ENCODE measurements at regions of chr6 and their contacts with region 1.

Region 1: DNA sequence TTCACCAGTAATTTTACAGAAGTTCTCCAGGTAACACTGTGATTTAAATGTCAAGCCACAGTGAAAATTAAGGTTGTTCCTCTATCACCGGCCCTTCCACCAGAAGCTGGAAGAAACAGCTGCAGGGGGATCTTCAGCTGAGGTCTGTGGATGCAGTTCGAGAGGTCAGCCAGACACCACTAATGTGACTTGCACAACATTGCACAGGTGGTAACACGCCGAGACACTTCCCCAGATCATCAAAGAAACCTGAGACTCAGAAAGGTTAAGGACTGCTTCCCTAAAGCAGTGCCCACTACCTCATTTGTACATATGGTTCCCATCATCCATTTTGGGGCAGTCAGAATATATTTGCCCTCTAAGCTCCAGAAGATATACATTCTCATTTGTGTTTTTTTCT is 8.1 kb upstream of the SERPINB9 start:
- DNase-seq: no peak
- H3K4me3 Mint-ChIP-seq: no peak overlapping the region
- H3K27ac Mint-ChIP-seq: no peak overlapping the region
- H3K4me1 Mint-ChIP-seq: peaks cover 43% of the 10 kb centered on the region
- H3K27me3 Mint-ChIP-seq: no peaks in the 10 kb centered on the region

Region 2: GRCh38 chr6:2791124-2791974 is 119.8 kb before region 1 on chr6:
- CTCF ChIA-PET with region 1: interaction called, 17 read pairs
- intact Hi-C with region 1: loop called (anchors 1 kb)
- DNase-seq: peak; percentile 87
- H3K4me3 Mint-ChIP-seq: no peak overlapping the region
- H3K27ac Mint-ChIP-seq: no peak overlapping the region
- H3K4me1 Mint-ChIP-seq: peaks cover 39% of the 10 kb centered on the region
- H3K27me3 Mint-ChIP-seq: no peaks in the 10 kb centered on the region

Region 3: DNA sequence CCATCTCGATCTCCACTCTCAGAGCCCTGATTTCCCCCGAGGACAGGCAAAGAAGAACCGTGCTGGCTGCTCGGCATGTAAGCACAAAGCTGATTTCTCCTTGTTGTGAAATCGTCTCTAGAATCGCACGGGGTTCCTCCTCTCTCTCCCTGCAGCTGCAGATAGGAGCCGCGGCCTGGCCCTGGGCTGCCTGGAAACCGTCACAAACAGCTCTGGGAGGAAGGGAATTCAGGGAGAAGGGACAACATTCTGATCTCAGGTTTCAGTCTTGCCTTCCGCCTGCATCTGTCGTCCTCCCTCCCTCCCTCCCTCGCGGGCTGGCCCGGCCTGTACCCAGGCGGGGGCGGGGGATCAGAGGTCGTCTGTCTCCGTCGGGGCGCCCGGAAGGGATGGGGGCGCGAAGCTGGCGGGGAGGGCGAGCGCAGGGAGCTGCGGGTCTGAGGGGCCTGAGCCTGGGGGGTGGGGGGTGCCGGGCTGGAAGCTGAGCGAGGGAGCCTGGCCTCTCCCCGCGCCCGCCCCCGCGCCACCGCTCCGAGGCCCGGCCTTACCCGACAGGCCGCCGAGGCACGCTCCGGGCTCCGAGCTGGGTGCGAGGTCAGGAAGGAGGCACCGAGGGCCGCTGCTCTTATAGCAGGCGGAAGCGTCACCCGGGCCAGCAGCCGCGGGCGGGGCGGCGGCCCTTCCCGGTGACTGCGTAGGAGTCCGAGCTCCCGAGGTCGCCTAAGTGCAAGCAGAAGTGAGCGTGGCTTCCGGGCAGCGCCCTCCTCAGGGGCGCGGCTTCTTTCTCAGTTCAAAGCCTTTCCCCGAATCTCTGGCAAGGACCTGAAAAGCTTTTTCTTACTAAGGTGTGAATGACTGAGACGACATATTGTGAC is 69.7 kb before region 1 on chr6 and contains the start of gene SERPINB1:
- CTCF ChIA-PET with region 1: interaction called, 63 read pairs
- intact Hi-C with region 1: loop called (anchors 1 kb)
- DNase-seq: peak; percentile 94
- H3K4me3 Mint-ChIP-seq: peak within 1 kb of the TSS; percentile 81
- H3K27ac Mint-ChIP-seq: peak within 1 kb of the TSS; percentile 87
- H3K4me1 Mint-ChIP-seq: peaks cover 61% of the 10 kb centered on the region
- H3K27me3 Mint-ChIP-seq: no peaks in the 10 kb centered on the region
- total RNA-seq, gene SERPINB1: 200 to 208 TPM

Region 4: DNA sequence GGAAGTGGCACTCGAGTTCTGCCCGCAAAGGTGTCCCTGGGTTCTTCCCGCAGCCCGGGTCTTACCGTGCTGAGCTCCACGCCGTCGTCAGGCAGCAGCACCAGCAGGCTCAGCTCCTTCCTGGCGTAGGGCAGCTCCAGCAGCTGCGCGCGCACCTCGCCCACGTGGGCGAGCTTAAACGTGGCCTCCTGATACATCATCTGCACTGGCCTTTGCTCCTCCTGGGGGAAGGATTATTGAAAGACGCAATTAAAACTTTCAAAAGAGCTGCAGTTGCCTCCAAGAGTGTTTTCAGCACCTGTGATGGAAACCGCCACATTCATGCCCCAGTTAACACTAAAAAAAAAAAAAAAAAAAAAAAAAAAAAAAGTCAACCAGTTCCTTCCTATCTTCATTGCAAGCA is 19.4 kb before region 1 on chr6:
- CTCF ChIA-PET with region 1: interaction called, 6 read pairs
- intact Hi-C with region 1: loop called (anchors 2 kb)
- DNase-seq: peak; percentile 85
- H3K4me3 Mint-ChIP-seq: peak overlapping the region; percentile 75
- H3K27ac Mint-ChIP-seq: peak overlapping the region; percentile 88
- H3K4me1 Mint-ChIP-seq: peaks cover 71% of the 10 kb centered on the region
- H3K27me3 Mint-ChIP-seq: no peaks in the 10 kb centered on the region

Region 5: GRCh38 chr6:2900821-2901644 is 10.1 kb before region 1 on chr6:
- CTCF ChIA-PET with region 1: interaction called, 14 read pairs
- intact Hi-C with region 1: loop called (anchors 1 kb)
- DNase-seq: no peak
- H3K4me3 Mint-ChIP-seq: peak overlapping the region; percentile 99
- H3K27ac Mint-ChIP-seq: peak overlapping the region; percentile 96
- H3K4me1 Mint-ChIP-seq: peaks cover 52% of the 10 kb centered on the region
- H3K27me3 Mint-ChIP-seq: no peaks in the 10 kb centered on the region

Measured in activated naive CD4-positive, alpha-beta T cell treated with anti-CD3 and anti-CD28 coated beads for 36 hours (primary cell).